CD4-positive, alpha-beta T cell (primary cell): ENCODE measurements at regions of chr3 and their contacts with region 1.

Region 1: GRCh38 chr3:183285828-183286457 is 32.9 kb downstream of the B3GNT5 start:
- DNase-seq: peak; percentile 76 to 98 (median 84)
- ATAC-seq: peak; percentile 90
- H3K4me3 ChIP-seq: no peak overlapping the region
- H3K4me3 Mint-ChIP-seq: peak overlapping the region; percentile 39
- H3K27ac ChIP-seq: peak overlapping the region; percentile 44 to 84
- H3K27ac Mint-ChIP-seq: peak overlapping the region; percentile 88
- H3K4me1 ChIP-seq: peaks cover 13% of the 10 kb centered on the region
- H3K4me1 Mint-ChIP-seq: peaks cover 28% of the 10 kb centered on the region
- H3K27me3 ChIP-seq: no peaks in the 10 kb centered on the region
- H3K27me3 Mint-ChIP-seq: no peaks in the 10 kb centered on the region
- CTCF ChIP-seq: no peak

Region 2: GRCh38 chr3:183033746-183034145 is 252.2 kb before region 1 on chr3:
- CTCF ChIA-PET with region 1: no interaction called
- POLR2A ChIA-PET with region 1: no interaction called
- intact Hi-C with region 1: no loop called
- DNase-seq: no peak
- ATAC-seq: no peak
- H3K4me3 ChIP-seq: no peak overlapping the region
- H3K4me3 Mint-ChIP-seq: no peak overlapping the region
- H3K27ac ChIP-seq: no peak overlapping the region
- H3K27ac Mint-ChIP-seq: no peak overlapping the region
- H3K4me1 ChIP-seq: no peaks in the 10 kb centered on the region
- H3K4me1 Mint-ChIP-seq: no peaks in the 10 kb centered on the region
- H3K27me3 ChIP-seq: no peaks in the 10 kb centered on the region
- H3K27me3 Mint-ChIP-seq: no peaks in the 10 kb centered on the region
- CTCF ChIP-seq: no peak

Region 3: GRCh38 chr3:183210839-183211341 is 75.1 kb before region 1 on chr3:
- CTCF ChIA-PET with region 1: no interaction called
- POLR2A ChIA-PET with region 1: no interaction called
- intact Hi-C with region 1: loop called in 1 of 2 experiments (anchors 2 kb)
- DNase-seq: peak in 2 of 14 experiments; percentile 43 to 54
- ATAC-seq: no peak
- H3K4me3 ChIP-seq: no peak overlapping the region
- H3K4me3 Mint-ChIP-seq: no peak overlapping the region
- H3K27ac ChIP-seq: no peak overlapping the region
- H3K27ac Mint-ChIP-seq: no peak overlapping the region
- H3K4me1 ChIP-seq: no peaks in the 10 kb centered on the region
- H3K4me1 Mint-ChIP-seq: no peaks in the 10 kb centered on the region
- H3K27me3 ChIP-seq: no peaks in the 10 kb centered on the region
- H3K27me3 Mint-ChIP-seq: peaks cover 5% of the 10 kb centered on the region
- CTCF ChIP-seq: no peak

Region 4: GRCh38 chr3:183252973-183253901 is 32.7 kb before region 1 on chr3 and contains the start of gene B3GNT5:
- CTCF ChIA-PET with region 1: no interaction called
- POLR2A ChIA-PET with region 1: interaction called, 5 read pairs
- intact Hi-C with region 1: loop called in 1 of 2 experiments (anchors 5 kb)
- DNase-seq: peak in 6 of 14 experiments; percentile 2 to 53 (median 44)
- ATAC-seq: peak; percentile 57
- H3K4me3 ChIP-seq: peak within 1 kb of the TSS; percentile 66
- H3K4me3 Mint-ChIP-seq: peak within 1 kb of the TSS; percentile 83
- H3K27ac ChIP-seq: no peak within 1 kb of the TSS
- H3K27ac Mint-ChIP-seq: no peak within 1 kb of the TSS
- H3K4me1 ChIP-seq: peaks cover 16% of the 10 kb centered on the region
- H3K4me1 Mint-ChIP-seq: peaks cover 9% of the 10 kb centered on the region
- H3K27me3 ChIP-seq: peaks cover 16 to 20% of the 10 kb centered on the region in 2 experiments
- H3K27me3 Mint-ChIP-seq: peaks cover 46% of the 10 kb centered on the region
- CTCF ChIP-seq: no peak
- total RNA-seq, gene B3GNT5: 0.60 to 0.73 TPM

Region 5: GRCh38 chr3:183591881-183592521 is 306.1 kb after region 1 on chr3:
- CTCF ChIA-PET with region 1: no interaction called
- POLR2A ChIA-PET with region 1: no interaction called
- intact Hi-C with region 1: no loop called
- DNase-seq: peak in 3 of 14 experiments; percentile 57 to 60 (median 59)
- ATAC-seq: no peak
- H3K4me3 ChIP-seq: peak overlapping the region; percentile 2
- H3K4me3 Mint-ChIP-seq: peak overlapping the region; percentile 81
- H3K27ac ChIP-seq: no peak overlapping the region
- H3K27ac Mint-ChIP-seq: peak overlapping the region; percentile 62
- H3K4me1 ChIP-seq: peaks cover 32% of the 10 kb centered on the region
- H3K4me1 Mint-ChIP-seq: peaks cover 44% of the 10 kb centered on the region
- H3K27me3 ChIP-seq: no peaks in the 10 kb centered on the region
- H3K27me3 Mint-ChIP-seq: no peaks in the 10 kb centered on the region
- CTCF ChIP-seq: peak; percentile 48